Posterior vena cava (tissue), 2 donors: ENCODE measurements at regions of chr15 and their contacts with region 1.

Region 1: GRCh38 chr15:77784395-77785292 is 151.9 kb upstream of the LINGO1 start:
- DNase-seq: no peak

Region 2: DNA sequence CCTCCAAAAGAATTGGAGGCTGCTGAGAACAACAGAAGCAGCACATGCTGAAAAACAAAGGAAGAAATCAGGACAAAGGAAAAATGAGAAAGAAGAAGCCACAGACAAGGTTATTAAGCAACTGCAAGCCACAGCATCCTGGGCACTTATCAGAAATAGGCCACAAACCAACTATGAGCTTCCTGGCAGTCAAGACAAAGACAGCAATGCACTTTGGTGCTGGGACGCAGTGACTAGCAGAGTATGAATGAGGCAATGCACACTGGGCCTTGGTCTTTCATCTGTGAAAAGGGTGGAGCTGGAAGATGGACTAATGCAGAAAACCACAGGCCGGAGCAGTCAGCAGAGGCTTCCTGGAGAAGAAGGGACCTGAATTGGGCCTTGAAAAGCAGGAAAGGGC is 96.0 kb before region 1 on chr15:
- intact Hi-C with region 1: loop called in 1 of 2 experiments (anchors 10 kb)
- DNase-seq: no peak

Region 3: DNA sequence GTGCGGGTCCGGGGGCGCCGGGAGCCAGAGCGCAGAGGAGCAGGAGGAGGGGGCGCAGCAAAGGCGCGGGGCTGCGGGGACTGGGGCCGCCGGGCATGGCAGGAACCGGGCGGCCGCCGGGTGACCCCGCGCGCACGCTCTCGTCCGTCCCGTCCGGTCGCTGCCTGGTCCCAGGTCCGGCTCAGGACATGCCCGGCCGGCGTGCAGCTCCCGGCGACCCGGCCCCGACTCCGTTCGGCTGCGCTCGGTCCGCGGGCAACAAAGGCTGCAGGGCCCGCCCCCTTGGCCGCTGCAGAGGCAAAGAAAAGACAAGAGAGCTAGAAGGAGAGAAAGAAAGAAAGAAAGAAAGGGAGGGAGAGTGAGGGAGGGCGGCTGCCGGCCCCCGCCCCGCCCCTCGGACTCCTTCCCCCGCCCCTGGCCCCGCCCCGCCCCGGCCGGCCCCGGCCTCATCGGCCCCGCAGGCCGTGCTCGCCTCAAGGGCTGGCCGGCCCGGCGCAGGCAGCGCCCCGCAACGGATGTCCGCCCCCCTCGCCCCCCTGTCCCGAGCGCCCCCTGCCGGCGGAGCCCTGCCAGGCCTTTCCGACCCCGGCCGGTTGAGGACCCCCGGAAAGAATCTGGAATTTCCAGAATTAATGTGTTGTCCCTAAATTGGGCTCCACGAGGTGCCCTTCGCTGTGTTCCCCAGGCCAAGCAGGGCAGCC is 1026.6 kb after region 1 on chr15 and contains the start of gene ADAMTS7:
- intact Hi-C with region 1: loop called in 1 of 2 experiments (anchors 5 kb)
- DNase-seq: peak; percentile 92
- total RNA-seq, gene ADAMTS7: 6.7 to 8.9 TPM